Activated CD8-positive, alpha-beta memory T cell treated with anti-CD3 and anti-CD28 coated beads, Interleukin-2, amount 10 ng/mL, durations not matched to agents 7 days and 5 days (primary cell): ENCODE measurements at regions of chr11 and their contacts with region 1.

Region 1: GRCh38 chr11:65900125-65900898 is at the start of gene FOSL1:
- DNase-seq: peak; percentile 93
- ATAC-seq: peak; percentile 84
- H3K4me3 Mint-ChIP-seq: peak within 1 kb of the TSS; percentile 72
- H3K27ac Mint-ChIP-seq: peak within 1 kb of the TSS; percentile 70
- H3K4me1 Mint-ChIP-seq: peaks cover 56% of the 10 kb centered on the region
- H3K27me3 Mint-ChIP-seq: peaks cover 3% of the 10 kb centered on the region
- total RNA-seq, gene FOSL1: 2.7 to 6.0 TPM

Region 2: GRCh38 chr11:65911682-65912568 is 11.6 kb after region 1 on chr11:
- CTCF ChIA-PET with region 1: interaction called, 11 read pairs
- DNase-seq: no peak
- ATAC-seq: no peak
- H3K4me3 Mint-ChIP-seq: no peak overlapping the region
- H3K27ac Mint-ChIP-seq: no peak overlapping the region
- H3K4me1 Mint-ChIP-seq: peaks cover 26% of the 10 kb centered on the region
- H3K27me3 Mint-ChIP-seq: peaks cover 2% of the 10 kb centered on the region